Mammary epithelial cell (primary cell): ENCODE measurements at regions of chr5 and their contacts with region 1.

Region 1: DNA sequence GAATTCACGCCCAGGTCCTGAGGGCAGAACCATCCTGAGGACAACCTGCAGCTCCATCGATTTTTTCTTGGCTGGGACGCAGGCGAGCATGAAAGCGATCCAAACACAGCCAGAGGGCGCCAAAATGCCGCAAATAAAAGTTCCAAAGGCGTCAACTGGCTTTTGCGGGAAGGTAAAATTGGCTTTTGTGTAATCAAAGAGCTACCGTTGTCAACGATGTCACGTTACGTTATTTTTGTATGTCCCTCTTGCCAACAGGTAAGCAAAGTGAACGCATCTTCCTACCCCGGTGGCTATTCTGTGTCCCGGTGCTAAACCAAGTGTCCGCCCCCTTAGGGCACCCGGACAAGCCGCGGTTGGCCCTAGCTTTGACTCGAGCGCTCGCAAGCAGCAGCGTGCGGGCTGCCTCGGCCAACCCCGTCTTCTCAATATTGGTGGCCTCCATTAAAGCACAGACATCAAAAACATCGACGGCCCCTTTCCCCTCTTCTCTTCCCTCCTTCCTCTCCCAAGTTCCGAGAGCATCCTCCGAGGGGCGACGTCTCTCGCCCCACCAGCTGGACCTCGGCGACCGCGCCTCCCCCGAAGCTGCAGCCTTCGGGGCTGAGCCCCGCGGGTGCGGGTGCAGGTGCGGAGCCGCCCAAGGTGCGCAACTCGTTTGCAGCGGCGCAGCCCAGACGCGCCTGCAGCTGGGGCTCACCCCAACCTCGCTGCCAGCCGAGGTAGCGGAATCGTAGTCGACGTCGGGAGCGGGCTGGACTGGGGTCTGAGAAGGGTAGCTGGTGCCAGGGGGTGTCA is 1.1 kb upstream of the BASP1 start:
- DNase-seq: peak; percentile 79
- H3K4me3 ChIP-seq: peak overlapping the region; percentile 9 to 67 (median 30)
- H3K27ac ChIP-seq: no peak overlapping the region
- H3K4me1 ChIP-seq: peaks cover 17% of the 10 kb centered on the region
- H3K27me3 ChIP-seq: no peaks in the 10 kb centered on the region
- CTCF ChIP-seq: peak; percentile 84 to 86

Region 2: GRCh38 chr5:16160706-16161105 is 1055.7 kb before region 1 on chr5:
- CTCF ChIA-PET with region 1: no interaction called
- dilution Hi-C with region 1: no loop called
- in situ Hi-C with region 1: loop called (anchors 25 kb)
- intact Hi-C with region 1: no loop called
- DNase-seq: peak; percentile 41
- H3K4me3 ChIP-seq: no peak overlapping the region
- H3K27ac ChIP-seq: no peak overlapping the region
- H3K4me1 ChIP-seq: no peaks in the 10 kb centered on the region
- H3K27me3 ChIP-seq: no peaks in the 10 kb centered on the region
- CTCF ChIP-seq: peak; percentile 71 to 85

Region 3: GRCh38 chr5:16540421-16540820 is 676.0 kb before region 1 on chr5:
- CTCF ChIA-PET with region 1: no interaction called
- dilution Hi-C with region 1: no loop called
- in situ Hi-C with region 1: no loop called
- intact Hi-C with region 1: no loop called
- DNase-seq: peak; percentile 83
- H3K4me3 ChIP-seq: no peak overlapping the region
- H3K27ac ChIP-seq: peak overlapping the region; percentile 66
- H3K4me1 ChIP-seq: peaks cover 25% of the 10 kb centered on the region
- H3K27me3 ChIP-seq: no peaks in the 10 kb centered on the region
- CTCF ChIP-seq: no peak

Region 4: GRCh38 chr5:16970826-16971225 is 245.5 kb before region 1 on chr5:
- CTCF ChIA-PET with region 1: no interaction called
- dilution Hi-C with region 1: no loop called
- in situ Hi-C with region 1: no loop called
- intact Hi-C with region 1: no loop called
- DNase-seq: peak; percentile 67
- H3K4me3 ChIP-seq: no peak overlapping the region
- H3K27ac ChIP-seq: no peak overlapping the region
- H3K4me1 ChIP-seq: no peaks in the 10 kb centered on the region
- H3K27me3 ChIP-seq: no peaks in the 10 kb centered on the region
- CTCF ChIP-seq: no peak

Region 5: GRCh38 chr5:17255471-17256021 is 39.2 kb after region 1 on chr5:
- CTCF ChIA-PET with region 1: no interaction called
- dilution Hi-C with region 1: no loop called
- in situ Hi-C with region 1: no loop called
- intact Hi-C with region 1: no loop called
- DNase-seq: peak; percentile 19
- H3K4me3 ChIP-seq: no peak overlapping the region
- H3K27ac ChIP-seq: no peak overlapping the region
- H3K4me1 ChIP-seq: peaks cover 40% of the 10 kb centered on the region
- H3K27me3 ChIP-seq: no peaks in the 10 kb centered on the region
- CTCF ChIP-seq: no peak

Region 6: DNA sequence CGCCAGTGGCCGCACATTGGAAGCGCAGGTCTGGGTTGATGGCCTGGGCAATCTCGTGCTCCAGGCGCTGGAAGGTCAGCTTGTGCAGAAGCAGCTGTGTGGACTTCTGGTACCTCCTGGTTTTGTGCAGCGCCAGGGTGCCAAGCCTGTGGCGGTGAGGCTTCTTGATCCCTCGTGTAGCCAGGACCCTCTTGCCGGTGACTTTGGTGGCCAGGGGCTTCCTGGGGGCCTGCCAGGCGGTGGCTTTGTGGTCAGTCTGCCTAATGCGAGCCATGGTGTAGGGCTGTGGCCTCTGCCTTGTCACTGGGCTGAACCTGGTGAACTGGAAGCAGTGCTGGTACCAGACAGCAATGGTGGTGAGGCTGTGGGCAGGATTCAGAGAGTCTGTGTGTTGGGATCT is 409.3 kb after region 1 on chr5:
- CTCF ChIA-PET with region 1: no interaction called
- dilution Hi-C with region 1: no loop called
- in situ Hi-C with region 1: no loop called
- intact Hi-C with region 1: loop called (anchors 5 kb)
- DNase-seq: no peak
- H3K4me3 ChIP-seq: no peak overlapping the region
- H3K27ac ChIP-seq: no peak overlapping the region
- H3K4me1 ChIP-seq: no peaks in the 10 kb centered on the region
- H3K27me3 ChIP-seq: no peaks in the 10 kb centered on the region
- CTCF ChIP-seq: no peak

Region 7: DNA sequence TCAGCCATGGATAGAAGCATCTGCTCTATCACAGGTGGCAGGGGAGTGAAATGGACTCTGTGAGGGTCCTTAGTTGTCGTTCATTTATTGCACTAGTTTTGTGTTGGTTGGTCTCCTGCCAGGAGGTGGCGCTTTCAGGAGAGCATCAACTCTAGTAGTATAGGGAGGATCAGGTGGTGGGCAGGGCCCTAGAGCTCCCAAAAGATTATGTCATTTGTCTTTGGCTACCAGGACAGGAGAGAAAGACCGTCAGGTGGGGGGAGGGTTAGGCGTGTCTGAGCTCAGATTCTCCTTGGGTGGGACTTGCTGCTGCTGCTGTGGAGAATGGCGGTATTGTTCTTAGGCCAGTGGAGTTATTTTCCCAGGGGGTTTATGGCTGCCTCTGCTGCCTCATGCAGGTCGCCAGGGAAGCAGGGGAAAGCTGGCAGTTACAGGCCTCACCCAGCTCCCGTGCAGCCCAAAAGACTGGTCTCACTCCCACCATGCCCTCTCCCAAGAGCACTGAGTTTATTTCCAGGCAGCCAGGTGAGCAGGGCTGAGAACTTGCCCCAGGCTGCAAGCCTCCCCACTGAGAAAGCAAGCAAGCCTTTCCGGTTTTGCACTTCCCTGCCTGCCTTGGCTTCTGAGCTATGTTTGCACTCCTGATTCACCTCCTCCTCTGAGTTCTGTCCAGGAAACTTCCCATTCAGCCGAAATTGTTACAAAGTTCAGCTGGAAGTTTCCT is 735.2 kb after region 1 on chr5:
- CTCF ChIA-PET with region 1: no interaction called
- dilution Hi-C with region 1: no loop called
- in situ Hi-C with region 1: no loop called
- intact Hi-C with region 1: loop called (anchors 10 kb)
- DNase-seq: peak; percentile 54
- H3K4me3 ChIP-seq: no peak overlapping the region
- H3K27ac ChIP-seq: no peak overlapping the region
- H3K4me1 ChIP-seq: peaks cover 8% of the 10 kb centered on the region
- H3K27me3 ChIP-seq: no peaks in the 10 kb centered on the region
- CTCF ChIP-seq: peak in 1 of 2 donors; percentile 18

Region 8: DNA sequence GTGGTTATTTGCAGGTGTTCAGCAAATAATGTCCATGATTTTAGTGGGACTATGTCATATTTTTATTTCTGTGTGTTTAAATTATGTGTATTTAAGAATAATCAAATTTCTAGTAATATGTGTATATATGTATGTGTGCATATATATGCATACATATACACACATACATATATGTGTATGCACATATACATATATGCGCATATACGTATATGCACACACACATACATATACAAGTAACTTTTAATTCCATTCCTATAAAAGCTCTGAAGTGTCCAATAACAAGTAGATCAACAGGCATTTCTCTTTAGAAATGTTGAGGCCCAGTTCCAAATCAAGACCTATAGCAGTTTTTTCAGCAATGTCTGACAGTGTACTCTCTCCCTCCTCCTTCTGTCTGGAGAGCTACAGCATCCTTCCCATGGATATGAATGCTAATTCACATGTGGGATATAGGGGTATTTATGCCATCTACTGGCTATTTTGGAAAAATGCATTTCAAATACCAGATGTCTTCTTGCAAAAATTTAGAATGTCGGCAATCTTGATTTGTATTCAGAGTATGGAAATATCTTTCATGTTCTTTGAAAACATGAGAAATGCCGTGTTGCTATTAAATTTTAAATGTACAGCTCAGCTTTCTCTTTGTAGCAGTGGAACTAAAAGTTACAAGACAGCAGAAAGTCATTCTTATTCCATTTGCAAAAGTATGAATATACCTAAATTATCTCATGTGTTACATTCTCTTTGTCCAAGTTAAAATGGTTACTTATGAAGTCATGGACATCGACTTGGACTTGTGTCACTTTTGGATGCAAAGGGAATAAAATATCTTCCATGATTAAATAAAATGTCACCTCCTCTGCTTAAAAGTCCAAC is 1065.5 kb after region 1 on chr5:
- CTCF ChIA-PET with region 1: no interaction called
- dilution Hi-C with region 1: loop called (anchors 25 kb)
- in situ Hi-C with region 1: no loop called
- intact Hi-C with region 1: loop called (anchors 1 kb)
- DNase-seq: peak; percentile 55
- H3K4me3 ChIP-seq: no peak overlapping the region
- H3K27ac ChIP-seq: no peak overlapping the region
- H3K4me1 ChIP-seq: no peaks in the 10 kb centered on the region
- H3K27me3 ChIP-seq: no peaks in the 10 kb centered on the region
- CTCF ChIP-seq: peak; percentile 55 to 65

Region 9: GRCh38 chr5:18314192-18314778 is 1097.9 kb after region 1 on chr5:
- CTCF ChIA-PET with region 1: no interaction called
- dilution Hi-C with region 1: no loop called
- in situ Hi-C with region 1: no loop called
- intact Hi-C with region 1: loop called (anchors 2 kb)
- DNase-seq: no peak
- H3K4me3 ChIP-seq: no peak overlapping the region
- H3K27ac ChIP-seq: no peak overlapping the region
- H3K4me1 ChIP-seq: no peaks in the 10 kb centered on the region
- H3K27me3 ChIP-seq: no peaks in the 10 kb centered on the region
- CTCF ChIP-seq: peak; percentile 34 to 45